Panc1 (cell line): ENCODE measurements at regions of chr17 and their contacts with region 1.

Region 1: DNA sequence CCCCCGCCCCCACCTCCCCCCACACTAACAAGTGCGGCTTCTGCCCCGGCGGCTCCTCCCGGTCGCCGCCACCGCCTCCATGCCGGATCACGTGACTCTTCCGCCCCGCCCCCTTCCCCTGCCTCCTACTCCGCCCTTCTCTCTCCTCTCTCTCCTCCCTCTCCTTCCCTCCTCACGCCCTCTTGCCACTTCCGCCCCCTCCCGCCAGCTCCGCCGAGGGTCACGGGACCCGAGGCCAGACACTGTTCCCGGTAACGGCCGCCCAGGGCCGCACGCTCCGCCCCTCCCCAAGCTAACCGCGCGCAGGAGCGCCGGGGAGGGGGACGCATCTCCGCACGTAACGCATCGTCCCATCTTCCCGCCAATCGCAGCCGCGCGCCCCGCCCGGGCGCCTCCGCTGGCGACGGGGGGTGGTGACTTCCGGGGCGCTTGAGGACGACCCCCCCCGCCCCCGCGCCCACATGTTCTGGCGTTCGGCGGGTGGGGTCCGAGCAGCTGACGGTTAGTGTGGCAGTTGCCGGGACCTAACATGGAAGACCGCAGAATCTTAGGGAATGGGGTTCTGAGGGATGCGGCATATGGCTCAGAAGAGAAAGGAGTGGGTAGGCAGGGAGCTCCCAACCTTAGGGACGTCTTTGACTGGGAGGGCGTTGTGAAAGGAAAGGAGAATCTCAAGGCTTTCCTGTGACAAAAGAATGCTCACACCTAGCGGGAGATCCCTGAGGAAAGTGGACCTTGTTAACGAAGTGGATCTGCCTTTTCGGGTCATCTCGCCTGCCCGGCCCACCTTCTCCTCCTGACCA is at the start of gene USP32:
- DNase-seq: peak; percentile 82
- ATAC-seq: peak; percentile 95
- H3K4me3 ChIP-seq: peak within 1 kb of the TSS; percentile 86 to 92
- H3K27ac ChIP-seq: peak within 1 kb of the TSS; percentile 99
- H3K4me1 ChIP-seq: peaks cover 16% of the 10 kb centered on the region
- H3K27me3 ChIP-seq: no peaks in the 10 kb centered on the region
- CTCF ChIP-seq: no peak
- total RNA-seq, gene USP32: 45.5 TPM

Region 2: GRCh38 chr17:60463157-60463835 is 71.1 kb after region 1 on chr17:
- CTCF ChIA-PET with region 1: no interaction called
- POLR2A ChIA-PET with region 1: interaction called, 12 read pairs
- in situ Hi-C with region 1: no loop called
- intact Hi-C with region 1: no loop called
- DNase-seq: no peak
- ATAC-seq: no peak
- H3K4me3 ChIP-seq: no peak overlapping the region
- H3K27ac ChIP-seq: no peak overlapping the region
- H3K4me1 ChIP-seq: no peaks in the 10 kb centered on the region
- H3K27me3 ChIP-seq: no peaks in the 10 kb centered on the region
- CTCF ChIP-seq: no peak